Sigmoid colon (tissue), 7 donors: ENCODE measurements at regions of chr14 and their contacts with region 1.

Region 1: GRCh38 chr14:58199726-58200479 is at the start of gene ACTR10:
- DNase-seq: peak; percentile 90
- H3K4me3 ChIP-seq: peak within 1 kb of the TSS; percentile 93 to 97 (median 94)
- H3K27ac ChIP-seq: peak within 1 kb of the TSS; percentile 89 to 97 (median 96)
- H3K4me1 ChIP-seq: peaks cover 0 to 23% (median 16%) of the 10 kb centered on the region in 4 donors
- H3K27me3 ChIP-seq: no peaks in the 10 kb centered on the region
- CTCF ChIP-seq: no peak
- EP300 ChIP-seq: no peak
- POLR2A ChIP-seq: peak; percentile 24 to 37
- total RNA-seq, gene ACTR10: 67.1 to 77.3 (median 69.3) TPM

Region 2: GRCh38 chr14:58060077-58060476 is 139.8 kb before region 1 on chr14:
- intact Hi-C with region 1: no loop called
- DNase-seq: no peak
- H3K4me3 ChIP-seq: no peak overlapping the region
- H3K27ac ChIP-seq: no peak overlapping the region
- H3K4me1 ChIP-seq: no peaks in the 10 kb centered on the region
- H3K27me3 ChIP-seq: no peaks in the 10 kb centered on the region
- CTCF ChIP-seq: no peak
- EP300 ChIP-seq: no peak
- POLR2A ChIP-seq: no peak

Region 3: DNA sequence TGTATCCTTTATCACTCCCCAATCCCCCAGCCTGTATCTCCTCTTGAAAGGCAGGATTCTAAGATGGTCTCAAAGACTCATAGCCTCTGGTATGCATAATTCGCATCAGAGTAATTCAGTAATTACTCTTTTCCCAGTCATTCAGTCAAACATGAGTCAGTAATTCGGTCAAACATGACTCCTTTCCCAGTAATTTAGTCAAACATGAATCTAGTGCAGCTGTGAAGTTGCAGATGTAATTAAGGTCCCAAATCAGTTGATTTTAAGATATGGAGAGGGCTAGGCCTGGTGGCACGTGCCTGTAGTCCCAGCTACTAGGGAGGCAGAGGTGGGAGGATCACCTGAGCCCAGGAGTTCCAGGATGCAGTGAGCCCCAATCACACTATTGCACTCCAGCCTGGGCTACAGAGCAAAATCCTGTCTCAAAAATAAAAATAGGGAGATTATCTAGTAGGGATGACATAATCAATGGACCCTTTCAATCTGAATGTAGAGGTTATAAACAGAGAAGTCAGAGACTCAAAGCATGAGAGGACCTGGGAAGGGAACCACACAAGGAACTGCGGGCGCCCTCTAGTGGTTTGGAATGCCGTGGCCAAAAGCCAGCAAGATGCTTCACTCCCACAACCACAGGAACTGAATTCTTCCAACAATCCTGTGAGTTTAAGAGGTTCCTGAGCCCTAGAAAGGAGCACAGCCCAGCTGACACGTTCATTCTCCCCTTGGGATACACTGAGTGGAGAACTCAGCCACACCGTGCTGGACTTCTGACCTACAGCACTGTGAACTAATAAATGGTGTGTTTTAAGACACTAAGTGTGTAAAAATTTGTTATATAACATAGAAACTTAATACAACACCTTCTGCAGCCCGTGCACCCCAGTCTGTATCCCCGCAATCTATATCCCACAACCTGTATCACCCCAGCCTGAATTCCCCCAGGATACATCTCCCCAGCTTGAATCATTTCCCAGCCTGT is 33.6 kb before region 1 on chr14:
- intact Hi-C with region 1: loop called (anchors 2 kb)
- DNase-seq: peak; percentile 90
- H3K4me3 ChIP-seq: no peak overlapping the region
- H3K27ac ChIP-seq: no peak overlapping the region
- H3K4me1 ChIP-seq: peaks cover 0 to 4% (median 0%) of the 10 kb centered on the region in 4 donors
- H3K27me3 ChIP-seq: no peaks in the 10 kb centered on the region
- CTCF ChIP-seq: peak; percentile 22 to 82 (median 50)
- EP300 ChIP-seq: no peak
- POLR2A ChIP-seq: no peak

Region 4: GRCh38 chr14:58239244-58240195 is 39.6 kb after region 1 on chr14:
- intact Hi-C with region 1: loop called (anchors 2 kb)
- DNase-seq: peak; percentile 88
- H3K4me3 ChIP-seq: peak overlapping the region; percentile 47 to 66 (median 54)
- H3K27ac ChIP-seq: peak overlapping the region; percentile 77 to 87 (median 81)
- H3K4me1 ChIP-seq: peaks cover 0 to 11% (median 8%) of the 10 kb centered on the region in 4 donors
- H3K27me3 ChIP-seq: no peaks in the 10 kb centered on the region
- CTCF ChIP-seq: no peak
- EP300 ChIP-seq: no peak
- POLR2A ChIP-seq: no peak